Gastrocnemius medialis (tissue), 4 donors: ENCODE measurements at regions of chr2 and their contacts with region 1.

Region 1: GRCh38 chr2:218438601-218438995 is 19.7 kb downstream of the VIL1 start:
- DNase-seq: no peak
- ATAC-seq: no peak
- H3K4me3 ChIP-seq: no peak overlapping the region
- H3K27ac ChIP-seq: no peak overlapping the region
- H3K4me1 ChIP-seq: no peaks in the 10 kb centered on the region
- H3K27me3 ChIP-seq: no peaks in the 10 kb centered on the region
- CTCF ChIP-seq: no peak
- POLR2A ChIP-seq: no peak

Region 2: GRCh38 chr2:218456849-218457248 is 18.3 kb after region 1 on chr2:
- in situ Hi-C with region 1: no loop called
- intact Hi-C with region 1: loop called (anchors 1 kb)
- DNase-seq: no peak
- ATAC-seq: no peak
- H3K4me3 ChIP-seq: no peak overlapping the region
- H3K27ac ChIP-seq: no peak overlapping the region
- H3K4me1 ChIP-seq: peaks cover 7 to 9% of the 10 kb centered on the region in 2 donors
- H3K27me3 ChIP-seq: no peaks in the 10 kb centered on the region
- CTCF ChIP-seq: no peak
- POLR2A ChIP-seq: no peak

Region 3: DNA sequence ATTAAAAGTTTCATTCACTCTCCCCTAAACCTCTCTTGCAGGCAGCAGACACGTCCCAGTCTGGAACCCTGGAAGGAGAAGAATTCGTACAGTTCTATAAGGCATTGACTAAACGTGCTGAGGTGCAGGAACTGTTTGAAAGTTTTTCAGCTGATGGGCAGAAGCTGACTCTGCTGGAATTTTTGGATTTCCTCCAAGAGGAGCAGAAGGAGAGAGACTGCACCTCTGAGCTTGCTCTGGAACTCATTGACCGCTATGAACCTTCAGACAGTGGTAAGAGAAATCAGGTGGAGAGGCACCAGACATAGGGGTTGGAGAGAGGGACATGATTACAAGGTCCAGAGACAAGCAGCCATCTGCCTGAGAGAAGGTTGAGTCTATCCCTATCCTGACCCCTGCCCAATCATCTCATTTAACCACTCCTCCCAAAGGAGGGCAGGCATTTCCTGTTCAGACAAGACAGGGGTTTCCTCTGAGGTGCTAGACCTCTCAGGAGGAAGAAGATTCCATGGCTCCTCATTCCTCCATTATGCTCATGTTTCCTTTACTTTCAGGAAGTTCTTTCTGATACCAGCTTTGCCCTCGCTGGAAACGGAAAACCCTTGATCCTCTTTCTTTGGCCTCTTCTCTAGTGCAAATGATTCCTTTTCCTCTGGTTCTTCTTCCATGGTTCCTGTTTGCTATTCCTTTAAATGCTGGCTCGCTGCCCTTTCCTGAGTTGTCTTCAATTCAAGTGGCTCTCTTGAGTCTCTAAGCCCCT is 184.2 kb after region 1 on chr2:
- in situ Hi-C with region 1: no loop called
- intact Hi-C with region 1: no loop called
- DNase-seq: no peak
- ATAC-seq: no peak
- H3K4me3 ChIP-seq: no peak overlapping the region
- H3K27ac ChIP-seq: peak overlapping the region; percentile 6 to 72 (median 44)
- H3K4me1 ChIP-seq: peaks cover 3 to 5% of the 10 kb centered on the region in 2 donors
- H3K27me3 ChIP-seq: no peaks in the 10 kb centered on the region
- CTCF ChIP-seq: no peak
- POLR2A ChIP-seq: no peak